Activated CD4-positive, alpha-beta T cell treated with anti-CD3 and anti-CD28 coated beads, Interleukin-2, amount 10 ng/mL, durations not matched to agents 7 days and 5 days (primary cell): ENCODE measurements at regions of chr4 and their contacts with region 1.

Region 1: DNA sequence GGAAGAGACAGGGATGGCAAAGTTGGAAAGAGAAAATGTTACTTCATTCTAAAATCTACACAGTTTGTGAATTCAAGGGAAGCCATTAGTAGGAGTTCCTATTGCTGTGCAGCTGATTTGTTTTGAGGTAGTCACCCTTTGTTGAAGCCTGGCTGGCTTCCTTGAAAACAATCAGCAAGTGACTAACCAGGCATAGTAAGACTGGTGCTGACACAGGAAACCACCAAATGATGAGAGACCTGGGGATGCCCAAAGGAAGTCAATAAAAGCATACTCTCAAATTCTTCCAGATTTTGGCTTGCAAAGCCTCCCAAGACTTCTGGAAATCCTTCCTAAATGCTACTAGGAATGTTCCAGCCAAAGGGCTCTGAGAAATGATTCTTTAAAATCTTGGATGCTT is 23.9 kb upstream of the PRDM8 start:
- DNase-seq: peak; percentile 71
- H3K4me3 Mint-ChIP-seq: peak overlapping the region; percentile 60
- H3K27ac Mint-ChIP-seq: peak overlapping the region; percentile 92
- H3K4me1 Mint-ChIP-seq: peaks cover 57% of the 10 kb centered on the region
- H3K27me3 Mint-ChIP-seq: peaks cover 2% of the 10 kb centered on the region

Region 2: DNA sequence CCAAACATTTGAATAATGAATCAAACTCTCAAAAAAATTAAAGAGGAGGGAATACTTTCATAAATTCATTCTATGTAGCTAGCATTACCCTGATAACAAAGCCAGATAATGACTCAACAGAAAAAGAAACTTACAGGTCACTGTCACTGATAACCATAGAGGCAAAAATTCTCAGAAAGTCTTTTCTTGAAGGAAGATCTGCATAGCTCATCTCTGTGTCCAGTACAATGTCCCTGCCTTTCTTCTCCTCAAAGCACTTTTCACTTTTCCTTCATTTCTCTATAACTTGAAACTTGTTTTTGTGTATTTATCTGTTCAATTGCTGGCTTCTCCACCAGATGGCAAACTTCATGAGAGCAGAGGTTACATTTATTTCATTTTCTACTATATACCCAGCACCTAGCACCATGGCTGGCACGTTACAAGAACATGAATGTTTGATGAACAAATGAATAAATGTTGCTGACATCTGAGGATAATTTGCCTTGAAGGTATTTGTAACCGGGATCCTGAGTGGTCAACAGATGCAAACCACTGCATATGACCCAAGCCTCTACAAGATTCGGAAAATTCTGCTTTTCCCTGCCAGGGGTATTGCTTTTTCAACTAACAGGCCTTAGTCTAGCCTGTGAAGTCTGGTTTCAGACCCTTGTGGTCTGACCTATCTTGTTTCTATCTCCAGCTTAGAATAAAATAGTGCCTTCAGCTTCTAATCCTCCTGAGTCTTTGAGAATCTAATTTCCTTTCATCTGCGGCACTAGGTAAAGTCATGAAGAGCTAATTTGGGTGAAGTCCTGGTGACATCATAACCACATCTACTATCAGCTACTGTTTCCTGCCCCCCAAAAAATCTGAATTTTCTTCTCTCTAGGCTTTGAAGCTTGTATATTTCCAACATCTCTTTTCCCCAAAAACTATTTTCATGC is 47.9 kb before region 1 on chr4:
- CTCF ChIA-PET with region 1: interaction called, 16 read pairs
- POLR2A ChIA-PET with region 1: interaction called, 5 read pairs
- DNase-seq: peak; percentile 68
- H3K4me3 Mint-ChIP-seq: peak overlapping the region; percentile 23
- H3K27ac Mint-ChIP-seq: peak overlapping the region; percentile 84
- H3K4me1 Mint-ChIP-seq: peaks cover 55% of the 10 kb centered on the region
- H3K27me3 Mint-ChIP-seq: no peaks in the 10 kb centered on the region

Region 3: GRCh38 chr4:80138551-80139538 is 34.6 kb before region 1 on chr4:
- CTCF ChIA-PET with region 1: interaction called, 13 read pairs
- POLR2A ChIA-PET with region 1: interaction called, 4 read pairs
- DNase-seq: peak; percentile 73
- H3K4me3 Mint-ChIP-seq: peak overlapping the region; percentile 36
- H3K27ac Mint-ChIP-seq: peak overlapping the region; percentile 89
- H3K4me1 Mint-ChIP-seq: peaks cover 59% of the 10 kb centered on the region
- H3K27me3 Mint-ChIP-seq: no peaks in the 10 kb centered on the region

Region 4: GRCh38 chr4:80153874-80154544 is 19.4 kb before region 1 on chr4:
- CTCF ChIA-PET with region 1: interaction called, 13 read pairs
- POLR2A ChIA-PET with region 1: no interaction called
- DNase-seq: no peak
- H3K4me3 Mint-ChIP-seq: no peak overlapping the region
- H3K27ac Mint-ChIP-seq: no peak overlapping the region
- H3K4me1 Mint-ChIP-seq: peaks cover 1% of the 10 kb centered on the region
- H3K27me3 Mint-ChIP-seq: peaks cover 1% of the 10 kb centered on the region